ENCODE measurements at regions of chr19 and their contacts with region 1.

Region 1: DNA sequence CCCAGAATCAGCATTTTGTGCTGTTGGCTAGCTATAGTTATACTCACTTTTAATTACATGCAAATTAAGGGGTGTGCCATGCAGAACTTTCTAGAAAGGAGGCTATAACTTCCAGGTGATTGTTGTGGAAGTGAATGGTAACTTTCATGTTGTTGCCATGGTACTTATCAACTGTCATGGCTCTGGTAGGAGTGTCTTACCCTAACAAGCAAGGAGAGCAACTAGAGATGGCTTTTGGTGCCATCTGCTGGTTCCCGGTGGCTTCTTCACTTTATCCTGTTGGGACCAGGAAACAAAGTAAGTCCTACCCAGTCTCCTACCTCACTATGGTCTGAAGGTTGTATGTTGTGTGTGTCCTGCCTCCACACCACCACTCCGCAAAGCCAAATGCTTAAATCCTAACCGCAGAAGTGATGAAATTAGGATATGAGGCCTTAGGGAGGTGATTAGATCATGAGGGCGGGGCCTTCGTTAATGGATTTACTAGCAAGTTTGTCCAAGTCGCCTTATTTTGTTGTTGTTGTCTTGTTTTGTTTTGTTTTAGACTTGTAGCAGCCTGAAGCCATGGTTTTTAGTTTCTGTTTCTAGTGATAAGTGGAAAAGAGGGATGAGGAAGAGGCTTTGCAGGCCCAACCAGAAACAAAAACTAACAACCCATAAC is 22.6 kb downstream of the FBXL12 start:
- DNase-seq: peak; percentile 76 to 82 (median 80)
- ATAC-seq: peak; percentile 26 to 56 (median 37)
- H3K4me3 ChIP-seq: no peak overlapping the region
- H3K27ac ChIP-seq: peak overlapping the region in 2 of 12 donors; percentile 4 to 31
- H3K4me1 ChIP-seq: peaks cover 0 to 11% (median 3%) of the 10 kb centered on the region in 12 donors
- H3K27me3 ChIP-seq: no peaks in the 10 kb centered on the region
- CTCF ChIP-seq: peak; percentile 66 to 92 (median 81)
- POLR2A ChIP-seq: no peak

Region 2: GRCh38 chr19:9140159-9140874 is 655.9 kb before region 1 on chr19 and contains the start of gene ZNF317:
- intact Hi-C with region 1: loop called in 5 of 10 experiments (anchors 5 to 10 kb)
- DNase-seq: peak; percentile 92 to 96 (median 94)
- ATAC-seq: peak; percentile 93 to 99 (median 98)
- H3K4me3 ChIP-seq: peak within 1 kb of the TSS; percentile 62 to 96 (median 80)
- H3K27ac ChIP-seq: peak within 1 kb of the TSS; percentile 54 to 94 (median 84)
- H3K4me1 ChIP-seq: peaks cover 0 to 27% (median 15%) of the 10 kb centered on the region in 12 donors
- H3K27me3 ChIP-seq: no peaks in the 10 kb centered on the region
- CTCF ChIP-seq: peak in 1 of 12 donors; percentile 17
- POLR2A ChIP-seq: peak in 1 of 2 donors; percentile 70
- total RNA-seq, gene ZNF317: 8.4 to 21.6 (median 13.5) TPM

Region 3: DNA sequence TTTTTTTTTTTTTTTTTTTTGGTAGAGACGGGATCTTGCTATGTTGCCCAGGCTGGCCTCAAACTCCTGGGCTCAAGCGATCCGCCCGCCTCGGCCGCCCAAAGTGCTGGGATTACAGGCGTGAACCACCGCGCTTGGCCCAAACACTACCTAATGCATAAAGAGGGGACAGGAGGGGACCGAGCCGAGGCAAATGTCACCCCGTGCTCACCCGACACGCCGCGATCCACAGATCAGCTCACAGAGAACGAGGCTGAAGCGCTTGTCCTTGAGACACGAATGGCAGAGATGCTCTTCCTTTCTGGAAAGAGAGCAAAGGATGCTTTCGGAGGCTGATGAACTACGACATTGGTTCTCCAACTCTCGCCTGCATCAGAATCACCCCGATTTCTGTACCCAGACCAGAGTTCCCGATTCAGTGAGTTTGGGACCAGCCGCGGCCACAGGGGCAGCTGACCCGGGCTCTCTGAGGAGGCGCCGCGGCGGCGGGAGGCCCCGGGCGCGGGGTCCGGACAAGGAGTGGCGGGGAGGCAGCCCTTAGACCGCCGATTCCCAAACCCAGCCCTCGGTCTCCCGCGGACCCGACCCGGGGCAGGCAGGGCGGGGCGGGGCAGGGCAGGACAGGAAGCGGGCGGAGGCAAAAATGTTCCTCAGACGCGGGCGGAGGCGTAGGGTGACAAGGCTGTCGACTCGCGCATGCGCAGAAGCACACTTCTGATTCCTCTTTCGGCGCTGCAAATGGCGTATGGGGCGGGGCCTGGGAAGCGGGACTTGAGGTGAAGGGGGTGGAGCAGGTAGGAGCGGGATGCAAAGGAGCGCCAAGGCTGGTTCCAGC is 486.9 kb before region 1 on chr19 and contains the start of gene ZNF699:
- intact Hi-C with region 1: loop called in 8 of 10 experiments (anchors 2 to 10 kb)
- DNase-seq: peak; percentile 99 to 100 (median 99)
- ATAC-seq: peak; percentile 98 to 99 (median 98)
- H3K4me3 ChIP-seq: peak within 1 kb of the TSS; percentile 50 to 99 (median 96)
- H3K27ac ChIP-seq: peak within 1 kb of the TSS; percentile 89 to 99 (median 96)
- H3K4me1 ChIP-seq: peaks cover 0 to 24% (median 11%) of the 10 kb centered on the region in 12 donors
- H3K27me3 ChIP-seq: no peaks in the 10 kb centered on the region
- CTCF ChIP-seq: no peak
- POLR2A ChIP-seq: peak in 1 of 2 donors; percentile 83
- total RNA-seq, gene ZNF699: 2.7 to 6.3 (median 4.1) TPM

Region 4: DNA sequence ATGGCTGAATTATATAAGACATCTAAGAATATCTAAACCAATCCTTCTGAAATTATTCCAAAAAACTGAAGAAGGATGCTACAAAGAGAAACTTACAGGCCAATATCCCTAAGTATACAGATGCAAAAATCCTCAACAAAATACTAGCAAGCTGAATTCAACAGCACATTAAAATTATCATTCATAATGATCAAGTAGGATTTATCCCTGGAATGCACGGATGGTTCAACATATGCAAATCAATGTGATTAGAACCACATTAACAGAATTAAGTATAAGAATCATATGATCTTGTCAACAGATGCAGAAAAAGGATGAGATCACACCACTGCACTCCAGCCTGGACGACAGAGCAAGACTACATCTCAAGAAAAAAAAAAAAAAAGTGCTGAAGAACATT is 311.1 kb before region 1 on chr19:
- intact Hi-C with region 1: no loop called
- DNase-seq: no peak
- ATAC-seq: no peak
- H3K4me3 ChIP-seq: no peak overlapping the region
- H3K27ac ChIP-seq: no peak overlapping the region
- H3K4me1 ChIP-seq: no peaks in the 10 kb centered on the region
- H3K27me3 ChIP-seq: no peaks in the 10 kb centered on the region
- CTCF ChIP-seq: no peak
- POLR2A ChIP-seq: no peak

Region 5: GRCh38 chr19:9584073-9584833 is 212.0 kb before region 1 on chr19 and contains the start of gene ZNF121:
- intact Hi-C with region 1: loop called in 3 of 10 experiments (anchors 2 to 10 kb)
- DNase-seq: peak; percentile 87 to 92 (median 90)
- ATAC-seq: peak; percentile 93 to 98 (median 97)
- H3K4me3 ChIP-seq: peak within 1 kb of the TSS; percentile 53 to 98 (median 87)
- H3K27ac ChIP-seq: peak within 1 kb of the TSS; percentile 69 to 95 (median 91)
- H3K4me1 ChIP-seq: peaks cover 0 to 30% (median 19%) of the 10 kb centered on the region in 12 donors
- H3K27me3 ChIP-seq: peaks cover 0 to 14% (median 0%) of the 10 kb centered on the region in 9 donors
- CTCF ChIP-seq: peak in 2 of 12 donors; percentile 10 to 13
- POLR2A ChIP-seq: peak in 1 of 2 donors; percentile 38
- total RNA-seq, gene ZNF121: 15.6 to 25.4 (median 19.1) TPM

Region 6: GRCh38 chr19:9627856-9628255 is 168.4 kb before region 1 on chr19:
- intact Hi-C with region 1: loop called in 8 of 10 experiments (anchors 1 to 5 kb)
- DNase-seq: no peak
- ATAC-seq: no peak
- H3K4me3 ChIP-seq: no peak overlapping the region
- H3K27ac ChIP-seq: no peak overlapping the region
- H3K4me1 ChIP-seq: peaks cover 0 to 8% (median 0%) of the 10 kb centered on the region in 12 donors
- H3K27me3 ChIP-seq: no peaks in the 10 kb centered on the region
- CTCF ChIP-seq: no peak
- POLR2A ChIP-seq: no peak

Region 7: GRCh38 chr19:9757544-9758501 is 38.4 kb before region 1 on chr19:
- intact Hi-C with region 1: no loop called
- DNase-seq: no peak
- ATAC-seq: no peak
- H3K4me3 ChIP-seq: no peak overlapping the region
- H3K27ac ChIP-seq: no peak overlapping the region
- H3K4me1 ChIP-seq: no peaks in the 10 kb centered on the region
- H3K27me3 ChIP-seq: no peaks in the 10 kb centered on the region
- CTCF ChIP-seq: no peak
- POLR2A ChIP-seq: no peak

Region 8: GRCh38 chr19:9818734-9819589 is 22.7 kb after region 1 on chr19 and contains the start of gene FBXL12:
- intact Hi-C with region 1: loop called in 3 of 10 experiments (anchors 1 kb)
- DNase-seq: peak; percentile 100
- ATAC-seq: peak; percentile 95 to 96 (median 96)
- H3K4me3 ChIP-seq: peak within 1 kb of the TSS; percentile 69 to 98 (median 88)
- H3K27ac ChIP-seq: peak within 1 kb of the TSS; percentile 88 to 98 (median 96)
- H3K4me1 ChIP-seq: peaks cover 4 to 26% (median 18%) of the 10 kb centered on the region in 12 donors
- H3K27me3 ChIP-seq: no peaks in the 10 kb centered on the region
- CTCF ChIP-seq: no peak
- POLR2A ChIP-seq: peak; percentile 36 to 84
- total RNA-seq, gene FBXL12: 9.8 to 17.6 (median 12.2) TPM